ENCODE measurements at regions of chr5 and their contacts with region 1.

Region 1: GRCh38 chr5:1167728-1168709 is 33.4 kb upstream of the SLC6A19 start:
- DNase-seq: no peak
- H3K4me3 ChIP-seq: peak overlapping the region; percentile 12
- CTCF ChIP-seq: peak; percentile 80

Region 2: DNA sequence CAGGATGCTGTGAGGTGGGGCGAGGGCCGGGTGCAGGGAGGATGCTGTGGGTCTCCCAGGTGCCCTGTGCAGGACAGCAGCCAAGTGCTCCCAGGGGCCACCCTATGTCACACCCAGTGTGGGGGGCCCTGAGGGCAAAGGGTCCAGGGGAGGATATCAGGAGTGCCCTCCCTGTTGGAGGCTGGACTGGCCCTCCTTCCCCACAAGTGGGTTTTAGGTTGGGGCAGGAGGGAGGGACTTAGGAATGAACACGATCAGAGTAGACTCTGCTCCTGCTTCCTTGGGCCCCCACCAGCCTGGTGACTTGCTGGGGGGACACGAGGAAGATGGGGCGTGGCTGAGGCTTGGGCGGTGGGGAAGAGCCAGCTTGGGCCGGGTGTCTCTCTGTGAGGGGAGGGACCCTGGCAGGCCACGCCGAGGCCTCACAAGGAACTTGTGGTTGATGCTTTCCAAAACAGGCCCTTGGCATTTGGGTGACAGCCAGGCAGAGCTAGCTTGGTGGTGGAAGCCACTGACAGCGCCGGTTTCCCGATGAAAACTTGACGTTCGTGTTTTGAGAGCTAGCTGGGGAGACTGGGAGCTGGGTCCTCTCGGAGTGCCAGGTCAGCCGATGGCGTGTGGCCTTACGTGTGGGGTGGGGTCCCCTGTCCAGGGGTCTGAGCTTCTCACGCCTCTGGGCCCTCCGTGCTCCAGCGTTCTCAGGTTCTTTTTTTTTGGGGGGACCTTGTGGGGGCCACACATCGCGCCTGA is 484.8 kb after region 1 on chr5:
- CTCF ChIA-PET with region 1: interaction called, 15 read pairs
- POLR2A ChIA-PET with region 1: no interaction called
- DNase-seq: no peak
- H3K4me3 ChIP-seq: no peak overlapping the region
- CTCF ChIP-seq: no peak